GM12878 (cell line): ENCODE measurements at regions of chr7 and their contacts with region 1.

Region 1: GRCh38 chr7:44973610-44974401 is 5.0 kb downstream of the MYO1G start:
- DNase-seq: no peak
- ATAC-seq: peak; percentile 56
- H3K4me3 ChIP-seq: no peak overlapping the region
- H3K27ac ChIP-seq: no peak overlapping the region
- H3K4me1 ChIP-seq: peaks cover 24% of the 10 kb centered on the region
- H3K27me3 ChIP-seq: no peaks in the 10 kb centered on the region
- CTCF ChIP-seq: peak; percentile 56 to 77 (median 62)
- EP300 ChIP-seq: no peak
- POLR2A ChIP-seq: no peak
- RAD21 ChIP-seq: peak; percentile 58

Region 2: GRCh38 chr7:44858161-44858560 is 115.6 kb before region 1 on chr7:
- CTCF ChIA-PET with region 1: interaction called, 15 read pairs
- POLR2A ChIA-PET with region 1: no interaction called
- RAD21 ChIA-PET with region 1: interaction called, 7 read pairs
- SMC1A ChIA-PET with region 1: interaction called, 9 read pairs
- in situ Hi-C with region 1: no loop called
- intact Hi-C with region 1: no loop called
- DNase-seq: no peak
- ATAC-seq: no peak; the same call in 2 of the 3 replicates
- H3K4me3 ChIP-seq: no peak overlapping the region
- H3K27ac ChIP-seq: no peak overlapping the region
- H3K4me1 ChIP-seq: no peaks in the 10 kb centered on the region
- H3K27me3 ChIP-seq: no peaks in the 10 kb centered on the region
- CTCF ChIP-seq: 0 out of 6 replicates have a peak, but pooled peaks of 1 of the 3 experiments have one; percentile 8
- EP300 ChIP-seq: no peak
- POLR2A ChIP-seq: no peak
- RAD21 ChIP-seq: no peak

Region 3: GRCh38 chr7:45007571-45008328 is 33.9 kb after region 1 on chr7:
- CTCF ChIA-PET with region 1: interaction called, 44 read pairs
- POLR2A ChIA-PET with region 1: interaction called, 280 read pairs
- RAD21 ChIA-PET with region 1: interaction called, 303 read pairs
- SMC1A ChIA-PET with region 1: interaction called, 303 read pairs
- in situ Hi-C with region 1: no loop called
- intact Hi-C with region 1: no loop called
- DNase-seq: peak; percentile 45
- ATAC-seq: peak; percentile 86
- H3K4me3 ChIP-seq: no peak overlapping the region
- H3K27ac ChIP-seq: peak overlapping the region; percentile 65
- H3K4me1 ChIP-seq: peaks cover 36% of the 10 kb centered on the region
- H3K27me3 ChIP-seq: no peaks in the 10 kb centered on the region
- CTCF ChIP-seq: no peak
- EP300 ChIP-seq: no peak
- POLR2A ChIP-seq: no peak
- RAD21 ChIP-seq: no peak

Region 4: GRCh38 chr7:45033261-45033930 is 59.6 kb after region 1 on chr7:
- CTCF ChIA-PET with region 1: interaction called, 23 read pairs
- POLR2A ChIA-PET with region 1: interaction called, 31 read pairs
- RAD21 ChIA-PET with region 1: interaction called, 41 read pairs
- SMC1A ChIA-PET with region 1: interaction called, 25 read pairs
- in situ Hi-C with region 1: no loop called
- intact Hi-C with region 1: no loop called
- DNase-seq: no peak
- ATAC-seq: peak; percentile 37
- H3K4me3 ChIP-seq: 0 out of 2 replicates have a peak overlapping the region, but pooled peaks have one; percentile 21
- H3K27ac ChIP-seq: peak overlapping the region; percentile 46; the same call in 1 of the 2 replicates
- H3K4me1 ChIP-seq: peaks cover 27% of the 10 kb centered on the region
- H3K27me3 ChIP-seq: no peaks in the 10 kb centered on the region
- CTCF ChIP-seq: no peak
- EP300 ChIP-seq: no peak
- POLR2A ChIP-seq: no peak
- RAD21 ChIP-seq: no peak

Region 5: DNA sequence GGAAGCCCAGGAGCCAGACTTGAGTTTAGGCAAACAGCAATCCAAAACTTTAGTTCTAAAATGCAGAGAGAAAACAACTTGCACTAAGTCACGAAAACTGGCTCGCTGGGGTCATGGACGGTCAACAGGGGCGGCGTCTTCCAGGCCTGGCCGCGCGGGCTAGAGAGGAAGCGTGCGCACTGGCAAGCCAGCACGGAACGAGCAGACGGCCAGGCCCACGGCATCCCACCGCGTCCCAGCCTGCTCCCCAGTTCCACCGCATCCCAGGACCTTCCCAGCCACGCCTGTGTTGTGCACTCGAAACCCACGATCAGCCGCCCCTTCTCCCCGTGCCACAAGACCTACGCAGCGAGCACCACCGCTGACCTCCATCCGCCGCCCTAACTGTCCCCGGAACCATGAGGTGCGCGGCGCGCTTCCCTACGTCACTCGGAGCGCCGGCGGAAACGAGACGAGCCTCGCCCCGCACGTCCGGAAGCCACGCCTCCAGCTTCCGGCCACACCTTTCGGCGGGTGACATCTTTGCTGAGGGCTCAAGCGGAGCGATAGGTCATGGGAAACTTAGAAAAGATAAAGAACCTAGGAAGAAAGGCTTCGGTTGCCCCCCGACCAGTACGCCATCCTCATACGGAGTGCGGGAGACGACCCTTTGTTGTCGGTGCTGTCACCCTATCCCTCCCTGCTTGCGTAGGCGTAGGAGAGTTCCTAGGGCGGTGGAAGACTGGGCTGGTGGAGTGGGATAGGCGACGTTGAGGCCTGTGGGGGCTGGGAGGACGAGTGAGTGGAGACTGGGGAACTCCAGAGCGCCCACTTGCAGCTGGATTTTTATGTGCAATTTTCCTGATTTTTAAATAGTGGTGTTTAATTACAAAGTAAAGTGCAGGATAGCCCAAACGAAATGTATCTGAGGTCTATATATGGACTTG is 137.8 kb after region 1 on chr7 and contains the start of gene TBRG4:
- CTCF ChIA-PET with region 1: interaction called, 39 read pairs
- POLR2A ChIA-PET with region 1: interaction called, 9 read pairs
- RAD21 ChIA-PET with region 1: interaction called, 17 read pairs
- SMC1A ChIA-PET with region 1: interaction called, 61 read pairs
- in situ Hi-C with region 1: no loop called
- intact Hi-C with region 1: loop called (anchors 1 kb)
- DNase-seq: peak; percentile 85
- ATAC-seq: peak; percentile 94
- H3K4me3 ChIP-seq: peak within 1 kb of the TSS; percentile 90
- H3K27ac ChIP-seq: peak within 1 kb of the TSS; percentile 83
- H3K4me1 ChIP-seq: peaks cover 7% of the 10 kb centered on the region
- H3K27me3 ChIP-seq: no peaks in the 10 kb centered on the region
- CTCF ChIP-seq: peak; percentile 11 to 22 (median 16); a peak in 4 of 6 replicates
- EP300 ChIP-seq: peak; percentile 12 to 57; a peak in 2 of 4 replicates
- POLR2A ChIP-seq: peak; percentile 100
- RAD21 ChIP-seq: no peak
- polyA plus RNA-seq, gene TBRG4: 8.4 to 13.3 TPM